ENCODE measurements at regions of chr18 and their contacts with region 1.

Region 1: DNA sequence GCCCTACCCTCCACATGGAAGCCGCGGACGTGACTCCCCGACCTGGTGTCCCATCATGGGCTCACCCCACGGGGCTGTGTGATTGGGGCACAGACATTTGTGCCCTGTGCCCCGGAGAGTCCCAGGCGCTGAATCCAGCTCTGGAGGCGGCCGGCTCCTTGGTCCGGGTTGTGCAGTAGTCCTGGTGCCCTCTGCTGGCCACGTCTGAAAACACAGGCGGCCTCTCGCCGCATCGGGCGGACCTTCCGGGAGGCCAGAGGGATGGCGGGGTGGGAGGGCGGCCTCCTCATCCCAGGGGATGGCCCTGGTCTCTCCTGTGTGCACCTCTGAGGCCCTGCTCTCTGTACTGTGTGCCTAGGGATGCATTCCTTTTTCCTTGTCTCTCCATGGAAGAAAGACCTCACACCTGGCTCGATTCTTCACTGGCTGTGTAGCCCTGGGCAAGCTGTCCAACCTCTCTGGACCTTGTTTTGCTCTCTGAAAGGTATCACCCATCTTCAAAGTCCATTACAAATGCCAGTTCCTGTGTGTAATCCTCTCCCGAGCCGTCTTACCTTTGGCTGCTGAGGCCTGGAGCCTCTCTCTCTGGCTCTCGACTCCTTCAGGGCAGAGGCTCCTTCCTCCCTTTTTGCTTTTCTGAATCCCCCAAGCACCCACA is 27.6 kb downstream of the CELF4 start:
- DNase-seq: peak; percentile 62
- H3K4me3 Mint-ChIP-seq: no peak overlapping the region
- H3K27ac Mint-ChIP-seq: no peak overlapping the region
- H3K4me1 Mint-ChIP-seq: no peaks in the 10 kb centered on the region
- H3K27me3 Mint-ChIP-seq: peaks cover 23% of the 10 kb centered on the region

Region 2: GRCh38 chr18:37385846-37386778 is 151.9 kb before region 1 on chr18:
- CTCF ChIA-PET with region 1: interaction called, 12 read pairs
- POLR2A ChIA-PET with region 1: no interaction called
- intact Hi-C with region 1: loop called (anchors 1 kb)
- DNase-seq: no peak
- H3K4me3 Mint-ChIP-seq: no peak overlapping the region
- H3K27ac Mint-ChIP-seq: no peak overlapping the region
- H3K4me1 Mint-ChIP-seq: no peaks in the 10 kb centered on the region
- H3K27me3 Mint-ChIP-seq: peaks cover 5% of the 10 kb centered on the region

Region 3: GRCh38 chr18:37445368-37445767 is 92.6 kb before region 1 on chr18:
- CTCF ChIA-PET with region 1: no interaction called
- POLR2A ChIA-PET with region 1: no interaction called
- intact Hi-C with region 1: loop called (anchors 2 kb)
- DNase-seq: no peak
- H3K4me3 Mint-ChIP-seq: no peak overlapping the region
- H3K27ac Mint-ChIP-seq: no peak overlapping the region
- H3K4me1 Mint-ChIP-seq: no peaks in the 10 kb centered on the region
- H3K27me3 Mint-ChIP-seq: peaks cover 2% of the 10 kb centered on the region